ENCODE measurements at regions of chr5 and their contacts with region 1.

Region 1: GRCh38 chr5:33969572-33970452 is 14.7 kb downstream of the SLC45A2 start:
- DNase-seq: peak; percentile 18
- H3K4me3 Mint-ChIP-seq: no peak overlapping the region
- H3K27ac Mint-ChIP-seq: no peak overlapping the region
- H3K4me1 Mint-ChIP-seq: peaks cover 20% of the 10 kb centered on the region
- H3K27me3 Mint-ChIP-seq: no peaks in the 10 kb centered on the region

Region 2: DNA sequence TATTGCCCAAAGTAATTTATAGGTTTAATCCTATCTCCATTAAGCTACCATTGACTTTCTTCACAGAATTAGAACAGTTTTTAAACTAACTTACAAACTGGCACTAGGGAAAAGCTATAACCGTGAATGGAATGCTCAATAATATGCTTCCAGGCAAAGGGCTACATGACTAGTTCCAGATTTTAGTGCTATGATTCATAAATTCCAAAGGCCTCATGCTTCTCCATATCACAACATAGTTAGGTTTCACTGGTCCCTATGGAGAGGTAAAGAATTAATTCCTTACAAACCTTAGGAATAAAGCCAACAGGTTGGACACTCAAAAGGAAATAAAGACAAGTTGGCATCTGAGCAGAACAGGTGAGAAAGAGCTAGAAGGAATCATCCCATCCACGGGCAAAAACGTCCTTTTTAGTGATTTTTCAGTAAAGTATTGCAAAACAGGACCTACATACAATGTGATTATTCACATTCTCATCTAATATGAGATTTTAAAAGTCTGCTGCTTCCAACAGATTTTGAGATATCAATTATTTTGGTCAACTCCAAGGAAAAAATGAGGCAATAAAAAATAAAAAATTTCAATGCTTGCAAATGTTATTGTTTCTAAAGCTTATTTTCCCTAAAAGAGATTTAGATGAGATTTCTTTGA is 626.0 kb before region 1 on chr5:
- CTCF ChIA-PET with region 1: no interaction called
- POLR2A ChIA-PET with region 1: no interaction called
- DNase-seq: no peak
- H3K4me3 Mint-ChIP-seq: no peak overlapping the region
- H3K27ac Mint-ChIP-seq: no peak overlapping the region
- H3K4me1 Mint-ChIP-seq: no peaks in the 10 kb centered on the region
- H3K27me3 Mint-ChIP-seq: no peaks in the 10 kb centered on the region

Region 3: DNA sequence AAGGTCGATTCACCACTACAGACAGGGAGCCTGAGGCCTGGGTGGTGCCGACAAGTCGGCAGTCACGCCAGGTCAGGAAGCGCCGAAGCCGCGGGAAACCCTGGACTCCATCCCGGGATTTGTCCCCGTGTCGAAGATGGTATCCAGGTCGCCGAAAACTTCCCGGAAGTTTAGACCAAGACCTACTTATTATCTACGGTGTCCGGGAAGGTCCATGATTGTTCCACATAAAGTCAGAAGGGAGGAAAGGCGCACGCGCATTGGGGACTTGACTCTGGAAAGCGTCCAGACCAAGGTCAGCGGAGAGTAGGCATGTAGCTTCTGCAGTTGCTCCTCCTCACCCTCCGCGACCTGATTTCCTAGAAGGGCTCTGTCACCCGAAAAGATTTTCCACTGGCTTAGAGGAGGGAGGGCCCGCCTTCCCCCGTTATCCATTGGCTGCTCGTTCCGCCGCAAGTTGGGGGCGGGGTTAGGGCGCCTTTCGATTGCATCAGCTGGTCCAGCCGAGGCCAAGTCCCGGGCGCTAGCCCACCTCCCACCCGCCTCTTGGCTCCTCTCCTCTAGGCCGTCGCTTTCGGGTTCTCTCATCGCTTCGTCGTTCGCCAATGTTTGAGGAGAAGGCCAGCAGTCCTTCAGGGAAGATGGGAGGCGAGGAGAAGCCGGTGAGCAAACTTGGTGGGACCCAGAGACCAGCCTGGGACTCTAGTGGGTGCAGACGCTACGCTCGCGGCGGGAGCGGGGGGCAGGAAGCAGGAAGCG is 529.2 kb before region 1 on chr5 and contains the start of gene TARS1:
- CTCF ChIA-PET with region 1: interaction called, 11 read pairs
- POLR2A ChIA-PET with region 1: interaction called, 4 read pairs
- DNase-seq: peak; percentile 96
- H3K4me3 Mint-ChIP-seq: no peak within 1 kb of the TSS
- H3K27ac Mint-ChIP-seq: no peak within 1 kb of the TSS
- H3K4me1 Mint-ChIP-seq: peaks cover 32% of the 10 kb centered on the region
- H3K27me3 Mint-ChIP-seq: no peaks in the 10 kb centered on the region
- total RNA-seq, gene TARS1: 195 to 201 TPM

Region 4: DNA sequence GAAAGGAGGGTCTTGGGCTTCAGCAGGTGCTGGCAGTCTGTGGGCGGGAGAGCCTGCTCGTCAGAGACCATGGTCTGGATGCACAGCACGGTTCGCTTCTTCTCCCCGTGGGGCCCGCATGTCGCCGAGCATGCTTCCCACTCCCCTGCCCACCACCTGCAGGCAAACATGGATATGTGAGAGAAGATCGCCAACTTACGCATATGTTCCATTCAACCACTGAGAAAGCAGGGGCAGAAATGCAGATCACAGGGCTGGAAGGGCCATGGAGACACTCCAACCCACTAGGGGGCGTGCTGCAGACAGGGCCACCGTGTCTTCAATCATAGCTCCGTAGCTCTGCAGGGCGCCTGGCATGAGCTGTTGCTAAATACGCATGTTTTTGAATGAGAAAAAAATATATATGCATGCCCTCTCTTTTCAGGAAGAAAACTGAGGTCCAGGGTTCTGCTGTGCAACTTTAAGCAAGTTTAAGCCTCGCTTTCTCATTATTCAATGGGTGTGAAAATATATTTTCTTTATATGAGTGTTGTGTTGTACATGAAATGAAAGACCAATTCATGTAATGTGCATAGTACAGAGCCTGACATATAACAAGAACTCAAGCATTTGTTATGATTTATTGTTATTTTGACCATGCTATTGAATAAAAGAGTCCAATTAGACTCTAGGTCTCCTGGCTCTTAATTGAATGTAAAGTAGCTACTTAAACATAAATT is 381.0 kb before region 1 on chr5:
- CTCF ChIA-PET with region 1: interaction called, 13 read pairs
- POLR2A ChIA-PET with region 1: no interaction called
- DNase-seq: peak; percentile 48
- H3K4me3 Mint-ChIP-seq: no peak overlapping the region
- H3K27ac Mint-ChIP-seq: no peak overlapping the region
- H3K4me1 Mint-ChIP-seq: no peaks in the 10 kb centered on the region
- H3K27me3 Mint-ChIP-seq: no peaks in the 10 kb centered on the region

Region 5: GRCh38 chr5:33958176-33958575 is 11.6 kb before region 1 on chr5:
- CTCF ChIA-PET with region 1: interaction called, 21 read pairs
- POLR2A ChIA-PET with region 1: no interaction called
- DNase-seq: no peak
- H3K4me3 Mint-ChIP-seq: no peak overlapping the region
- H3K27ac Mint-ChIP-seq: no peak overlapping the region
- H3K4me1 Mint-ChIP-seq: no peaks in the 10 kb centered on the region
- H3K27me3 Mint-ChIP-seq: peaks cover 10% of the 10 kb centered on the region

Measured in activated CD4-positive, alpha-beta memory T cell treated with anti-CD3 and anti-CD28 coated beads, Interleukin-2, amount 10 ng/mL, durations not matched to agents 7 days and 5 days (primary cell).